Aorta (tissue), 5 donors: ENCODE measurements at regions of chr3 and their contacts with region 1.

Region 1: GRCh38 chr3:65245133-65246063 is 557.6 kb upstream of the ADAMTS9 start:
- DNase-seq: no peak
- ATAC-seq: peak; percentile 21
- H3K4me3 ChIP-seq: no peak overlapping the region
- H3K27ac ChIP-seq: no peak overlapping the region
- H3K4me1 ChIP-seq: no peaks in the 10 kb centered on the region
- H3K27me3 ChIP-seq: no peaks in the 10 kb centered on the region

Region 2: DNA sequence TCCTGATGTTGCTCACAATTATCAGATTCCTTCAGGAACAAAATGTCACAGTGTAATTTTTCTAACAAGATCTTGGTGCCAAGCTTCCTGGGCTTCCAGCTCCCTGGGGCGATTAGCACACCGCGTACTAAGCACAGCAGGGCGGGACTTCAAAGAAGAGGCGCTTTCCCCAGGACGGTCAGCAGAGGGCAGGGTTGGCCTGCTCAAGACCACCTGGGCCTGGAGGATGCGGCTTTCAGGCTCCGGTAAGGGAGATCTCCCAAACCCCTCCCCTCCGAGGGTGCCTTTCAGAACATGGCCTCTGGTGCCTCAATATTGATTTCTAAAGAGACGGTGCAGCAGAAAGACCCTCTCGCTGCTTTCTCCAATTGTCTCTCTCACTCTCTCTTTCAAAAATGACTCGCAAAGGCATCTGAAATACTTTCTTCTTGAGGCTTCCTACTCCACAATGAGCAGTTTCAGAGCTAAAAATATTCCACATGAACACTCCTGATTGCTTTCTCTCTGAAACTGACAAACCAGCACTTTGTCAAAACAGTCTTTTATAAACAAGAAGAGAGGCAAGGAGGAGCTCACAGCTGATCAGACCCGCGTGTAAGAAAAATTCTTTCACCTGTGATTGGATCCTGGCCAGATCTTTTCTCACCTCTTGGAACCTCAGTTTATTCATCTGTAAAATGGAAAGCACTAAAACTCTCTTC is 711.6 kb before region 1 on chr3:
- intact Hi-C with region 1: loop called (anchors 2 to 5 kb)
- DNase-seq: peak; percentile 82 to 92
- ATAC-seq: peak; percentile 93
- H3K4me3 ChIP-seq: peak overlapping the region in 1 of 2 donors; percentile 8
- H3K27ac ChIP-seq: no peak overlapping the region
- H3K4me1 ChIP-seq: no peaks in the 10 kb centered on the region
- H3K27me3 ChIP-seq: no peaks in the 10 kb centered on the region